Activated T-helper 2 cell treated with anti-CD3 and anti-CD28 coated beads, Interferon-gamma antibody, Interleukin-2, Interleukin-4, amounts not matched to agents 10 μg/mL and 5 μg/mL and 100 μg/mL, durations not matched to agents 14 hours and 24 hours and 36 hours (primary cell): ENCODE measurements at regions of chr2 and their contacts with region 1.

Region 1: DNA sequence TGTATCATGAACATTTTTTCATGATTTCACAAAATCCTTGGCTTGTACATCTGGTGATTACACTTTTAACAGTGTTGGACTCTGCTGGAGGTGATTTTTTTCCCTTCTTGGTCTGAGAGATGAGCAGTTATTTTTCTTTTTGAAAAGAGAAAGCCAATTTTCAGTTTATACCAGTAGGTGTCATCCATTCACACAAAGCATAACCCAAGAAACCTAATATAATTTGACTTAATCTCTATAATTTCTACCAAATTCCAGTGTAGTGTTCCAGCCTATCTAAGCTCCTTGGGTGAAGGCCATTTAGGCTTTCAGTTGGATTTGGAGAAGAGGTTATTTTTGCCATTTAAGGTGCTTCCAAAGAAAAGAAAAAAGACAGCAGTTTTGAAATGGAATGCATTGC is 7.7 kb upstream of the ICOS start:
- DNase-seq: no peak
- H3K4me3 Mint-ChIP-seq: no peak overlapping the region
- H3K27ac Mint-ChIP-seq: no peak overlapping the region
- H3K4me1 Mint-ChIP-seq: peaks cover 28% of the 10 kb centered on the region
- H3K27me3 Mint-ChIP-seq: peaks cover 4% of the 10 kb centered on the region

Region 2: GRCh38 chr2:203893401-203893800 is 35.4 kb before region 1 on chr2:
- intact Hi-C with region 1: loop called (anchors 1 kb)
- DNase-seq: no peak
- H3K4me3 Mint-ChIP-seq: no peak overlapping the region
- H3K27ac Mint-ChIP-seq: peak overlapping the region; percentile 92
- H3K4me1 Mint-ChIP-seq: peaks cover 79% of the 10 kb centered on the region
- H3K27me3 Mint-ChIP-seq: no peaks in the 10 kb centered on the region

Region 3: DNA sequence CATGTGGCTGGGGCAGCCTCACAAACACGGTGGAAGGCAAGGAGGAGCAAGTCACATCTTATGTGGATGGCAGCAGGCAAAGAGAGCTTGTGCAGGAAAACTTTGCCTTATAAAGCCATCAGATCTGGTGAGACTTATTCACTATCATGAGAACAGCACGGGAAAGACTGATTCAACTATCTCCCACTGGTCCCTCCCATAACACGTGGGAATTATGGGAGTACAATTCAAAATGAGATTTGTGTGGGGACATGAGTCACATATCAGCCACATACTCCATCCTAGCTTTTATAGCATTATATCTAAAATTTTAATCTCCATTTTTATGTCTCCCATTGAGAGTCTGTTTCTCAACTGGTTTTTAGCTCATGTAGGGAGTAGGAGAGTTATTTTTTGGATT is 53.4 kb after region 1 on chr2:
- intact Hi-C with region 1: no loop called
- DNase-seq: no peak
- H3K4me3 Mint-ChIP-seq: no peak overlapping the region
- H3K27ac Mint-ChIP-seq: no peak overlapping the region
- H3K4me1 Mint-ChIP-seq: peaks cover 32% of the 10 kb centered on the region
- H3K27me3 Mint-ChIP-seq: peaks cover 3% of the 10 kb centered on the region